ENCODE measurements at regions of chr21 and their contacts with region 1.

Region 1: DNA sequence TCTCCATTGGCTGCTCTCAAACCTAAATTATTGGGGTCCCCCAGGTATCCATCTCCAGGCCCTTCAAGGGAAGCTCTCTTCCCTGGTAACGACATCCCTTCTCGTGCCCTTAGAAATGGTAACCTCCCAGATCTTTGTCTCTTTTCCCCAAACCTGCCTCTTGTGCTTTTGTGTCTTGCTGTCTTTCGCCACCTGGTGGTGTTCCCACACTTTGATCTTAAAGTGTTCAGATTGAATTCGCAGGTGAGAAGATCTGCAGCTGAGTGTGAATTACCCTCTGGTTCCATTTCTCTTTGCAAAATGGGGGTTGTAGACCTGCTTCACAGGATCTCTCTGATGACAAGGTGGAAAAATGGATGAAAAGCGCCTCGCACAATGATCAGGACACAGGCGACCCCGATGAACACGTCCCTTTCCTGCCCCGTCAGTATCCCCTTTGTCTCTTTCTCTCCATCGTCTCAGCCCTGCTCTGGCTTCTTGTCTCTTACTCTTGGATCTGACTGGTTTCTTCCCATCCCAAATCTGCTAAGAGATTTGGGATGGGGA is 53.1 kb downstream of the DOP1B start:
- DNase-seq: no peak
- ATAC-seq: no peak
- H3K4me3 ChIP-seq: no peak overlapping the region
- H3K27ac ChIP-seq: no peak overlapping the region
- H3K4me1 ChIP-seq: peaks cover 0 to 8% of the 10 kb centered on the region in 2 donors
- H3K27me3 ChIP-seq: no peaks in the 10 kb centered on the region
- CTCF ChIP-seq: peak; percentile 14 to 68 (median 60)
- POLR2A ChIP-seq: no peak

Region 2: DNA sequence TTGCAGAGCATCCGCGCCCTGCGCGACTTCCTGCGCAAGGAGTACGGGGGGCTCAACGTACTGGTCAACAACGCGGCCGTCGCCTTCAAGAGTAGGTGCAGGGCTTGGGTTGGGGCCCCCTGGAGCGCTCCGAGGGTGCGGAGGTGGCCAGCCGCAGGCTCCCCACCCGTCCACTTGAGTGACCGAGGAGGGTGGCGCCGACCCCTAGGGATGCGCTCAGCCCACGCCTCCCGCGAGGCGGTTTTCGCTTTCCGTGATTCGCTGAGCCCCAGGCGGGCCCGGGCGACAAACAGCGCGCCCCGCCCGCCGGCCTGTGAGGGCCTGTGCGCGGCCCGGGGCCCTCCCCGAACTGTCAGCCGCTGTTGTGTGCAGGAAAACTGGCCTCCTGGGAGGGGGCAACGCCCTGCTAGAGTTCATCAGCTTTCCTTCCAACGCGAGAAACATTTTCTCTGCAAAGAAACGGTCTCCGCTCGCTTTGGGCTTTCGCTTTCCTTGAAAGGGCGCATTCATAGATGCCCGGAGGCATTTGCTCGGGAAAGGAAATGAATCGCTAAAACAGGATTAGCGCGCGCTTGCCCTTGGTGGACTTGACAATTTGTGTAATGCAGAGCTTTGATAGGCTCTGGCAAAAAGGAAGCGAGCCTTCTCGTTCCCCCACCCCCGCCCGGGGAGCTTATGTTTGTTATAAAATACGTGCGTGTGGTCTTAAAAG is 74.2 kb before region 1 on chr21:
- in situ Hi-C with region 1: loop called in 2 of 4 experiments (anchors 5 kb)
- intact Hi-C with region 1: no loop called
- DNase-seq: peak in 1 of 2 donors; percentile 66
- ATAC-seq: peak; percentile 65 to 74
- H3K4me3 ChIP-seq: peak overlapping the region; percentile 65 to 79 (median 68)
- H3K27ac ChIP-seq: peak overlapping the region; percentile 70 to 84 (median 74)
- H3K4me1 ChIP-seq: peaks cover 8 to 21% of the 10 kb centered on the region in 2 donors
- H3K27me3 ChIP-seq: peaks cover 20 to 43% (median 28%) of the 10 kb centered on the region in 3 donors
- CTCF ChIP-seq: no peak
- POLR2A ChIP-seq: peak; percentile 26 to 40

Region 3: GRCh38 chr21:36141513-36141925 is 68.2 kb before region 1 on chr21:
- in situ Hi-C with region 1: loop called in 2 of 4 experiments (anchors 5 kb)
- intact Hi-C with region 1: loop called (anchors 1 kb)
- DNase-seq: peak; percentile 77 to 85
- ATAC-seq: peak; percentile 94 to 98
- H3K4me3 ChIP-seq: no peak overlapping the region
- H3K27ac ChIP-seq: no peak overlapping the region
- H3K4me1 ChIP-seq: peaks cover 0 to under 1% of the 10 kb centered on the region in 2 donors
- H3K27me3 ChIP-seq: no peaks in the 10 kb centered on the region
- CTCF ChIP-seq: peak; percentile 79 to 87 (median 85)
- POLR2A ChIP-seq: no peak

Region 4: GRCh38 chr21:36149788-36150711 is 59.6 kb before region 1 on chr21:
- in situ Hi-C with region 1: loop called in 1 of 4 experiments (anchors 5 kb)
- intact Hi-C with region 1: no loop called
- DNase-seq: no peak
- ATAC-seq: peak; percentile 51 to 52
- H3K4me3 ChIP-seq: no peak overlapping the region
- H3K27ac ChIP-seq: peak overlapping the region; percentile 42 to 60 (median 50)
- H3K4me1 ChIP-seq: peaks cover 10 to 15% of the 10 kb centered on the region in 2 donors
- H3K27me3 ChIP-seq: no peaks in the 10 kb centered on the region
- CTCF ChIP-seq: no peak
- POLR2A ChIP-seq: no peak

Region 5: GRCh38 chr21:36274128-36274527 is 64.4 kb after region 1 on chr21:
- in situ Hi-C with region 1: no loop called
- intact Hi-C with region 1: no loop called
- DNase-seq: no peak
- ATAC-seq: no peak
- H3K4me3 ChIP-seq: no peak overlapping the region
- H3K27ac ChIP-seq: no peak overlapping the region
- H3K4me1 ChIP-seq: no peaks in the 10 kb centered on the region
- H3K27me3 ChIP-seq: no peaks in the 10 kb centered on the region
- CTCF ChIP-seq: no peak
- POLR2A ChIP-seq: no peak

Measured in gastrocnemius medialis (tissue), 4 donors.